GM12878 (cell line): ENCODE measurements at regions of chr16 and their contacts with region 1.

Region 1: GRCh38 chr16:23687039-23687808 is 8.5 kb downstream of the PLK1 start:
- DNase-seq: no peak
- ATAC-seq: no peak
- H3K4me3 ChIP-seq: no peak overlapping the region
- H3K27ac ChIP-seq: no peak overlapping the region
- H3K4me1 ChIP-seq: no peaks in the 10 kb centered on the region
- H3K27me3 ChIP-seq: no peaks in the 10 kb centered on the region
- CTCF ChIP-seq: no peak
- EP300 ChIP-seq: no peak
- POLR2A ChIP-seq: no peak
- RAD21 ChIP-seq: no peak

Region 2: GRCh38 chr16:23274969-23275368 is 412.3 kb before region 1 on chr16:
- CTCF ChIA-PET with region 1: no interaction called
- POLR2A ChIA-PET with region 1: no interaction called
- RAD21 ChIA-PET with region 1: no interaction called
- SMC1A ChIA-PET with region 1: no interaction called
- in situ Hi-C with region 1: no loop called
- intact Hi-C with region 1: no loop called
- DNase-seq: no peak
- ATAC-seq: peak; percentile 70
- H3K4me3 ChIP-seq: no peak overlapping the region
- H3K27ac ChIP-seq: no peak overlapping the region
- H3K4me1 ChIP-seq: no peaks in the 10 kb centered on the region
- H3K27me3 ChIP-seq: no peaks in the 10 kb centered on the region
- CTCF ChIP-seq: no peak
- EP300 ChIP-seq: no peak
- POLR2A ChIP-seq: no peak
- RAD21 ChIP-seq: no peak

Region 3: DNA sequence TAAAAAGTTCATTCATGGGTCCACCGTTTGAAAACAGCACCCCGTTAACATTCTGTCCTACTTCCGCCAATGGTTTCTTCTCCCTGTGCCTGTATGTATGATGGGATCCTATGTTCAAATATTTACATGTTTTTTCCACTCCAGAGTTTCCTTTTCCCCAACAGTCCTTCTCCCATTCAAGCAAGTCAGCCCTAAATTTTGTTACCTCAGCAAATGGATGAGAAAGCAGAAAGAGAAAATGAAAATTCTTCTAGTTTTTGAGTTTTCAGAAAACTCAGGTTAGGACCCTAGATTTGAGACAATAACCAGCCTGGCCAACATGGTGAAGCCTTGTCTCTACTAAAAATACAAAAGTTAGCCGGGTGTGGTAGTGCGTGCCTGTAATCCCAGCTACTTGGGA is 29.3 kb after region 1 on chr16:
- CTCF ChIA-PET with region 1: no interaction called
- POLR2A ChIA-PET with region 1: no interaction called
- RAD21 ChIA-PET with region 1: no interaction called
- SMC1A ChIA-PET with region 1: no interaction called
- in situ Hi-C with region 1: no loop called
- intact Hi-C with region 1: no loop called
- DNase-seq: no peak
- ATAC-seq: no peak
- H3K4me3 ChIP-seq: no peak overlapping the region
- H3K27ac ChIP-seq: no peak overlapping the region
- H3K4me1 ChIP-seq: no peaks in the 10 kb centered on the region
- H3K27me3 ChIP-seq: peaks cover 0 to 2% of the 10 kb centered on the region in 2 experiments; a peak in 1 of 4 replicates
- CTCF ChIP-seq: no peak
- EP300 ChIP-seq: no peak
- POLR2A ChIP-seq: no peak
- RAD21 ChIP-seq: no peak

Region 4: DNA sequence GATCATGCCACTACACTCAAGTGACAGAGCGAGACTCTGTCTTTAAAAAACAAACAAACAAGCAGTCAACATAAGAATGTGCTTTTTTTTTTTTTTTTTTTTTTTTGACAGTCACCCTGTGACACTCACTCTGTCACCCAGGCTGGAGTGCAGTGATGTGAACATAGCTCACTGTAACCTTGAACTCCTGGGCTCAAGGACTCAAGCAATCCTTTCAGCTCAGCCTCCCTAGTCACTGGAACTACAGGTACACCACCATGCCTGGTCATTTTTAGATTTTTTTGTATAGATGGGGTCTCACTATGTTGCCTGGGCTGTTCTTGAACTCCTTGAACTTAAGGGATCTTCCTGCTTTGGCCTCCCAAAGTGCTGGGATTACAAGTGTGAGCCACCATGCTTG is 52.3 kb after region 1 on chr16:
- CTCF ChIA-PET with region 1: no interaction called
- POLR2A ChIA-PET with region 1: no interaction called
- RAD21 ChIA-PET with region 1: no interaction called
- SMC1A ChIA-PET with region 1: no interaction called
- in situ Hi-C with region 1: loop called (anchors 5 kb)
- intact Hi-C with region 1: no loop called
- DNase-seq: no peak
- ATAC-seq: no peak
- H3K4me3 ChIP-seq: no peak overlapping the region
- H3K27ac ChIP-seq: no peak overlapping the region
- H3K4me1 ChIP-seq: peaks cover 4% of the 10 kb centered on the region
- H3K27me3 ChIP-seq: no peaks in the 10 kb centered on the region; a peak in 2 of 4 replicates
- CTCF ChIP-seq: no peak
- EP300 ChIP-seq: no peak
- POLR2A ChIP-seq: no peak
- RAD21 ChIP-seq: no peak